AG04450 (cell line): ENCODE measurements at regions of chrX and their contacts with region 1.

Region 1: GRCh38 chrX:21963731-21964405 is 23.4 kb downstream of the SMS start:
- DNase-seq: no peak
- H3K4me3 ChIP-seq: no peak overlapping the region
- H3K27ac ChIP-seq: peak overlapping the region; percentile 65
- H3K27me3 ChIP-seq: no peaks in the 10 kb centered on the region
- CTCF ChIP-seq: no peak

Region 2: GRCh38 chrX:21524008-21524407 is 439.9 kb before region 1 on chrX:
- CTCF ChIA-PET with region 1: no interaction called
- POLR2A ChIA-PET with region 1: no interaction called
- DNase-seq: no peak
- H3K4me3 ChIP-seq: no peak overlapping the region
- H3K27ac ChIP-seq: no peak overlapping the region
- H3K27me3 ChIP-seq: no peaks in the 10 kb centered on the region
- CTCF ChIP-seq: no peak

Region 3: DNA sequence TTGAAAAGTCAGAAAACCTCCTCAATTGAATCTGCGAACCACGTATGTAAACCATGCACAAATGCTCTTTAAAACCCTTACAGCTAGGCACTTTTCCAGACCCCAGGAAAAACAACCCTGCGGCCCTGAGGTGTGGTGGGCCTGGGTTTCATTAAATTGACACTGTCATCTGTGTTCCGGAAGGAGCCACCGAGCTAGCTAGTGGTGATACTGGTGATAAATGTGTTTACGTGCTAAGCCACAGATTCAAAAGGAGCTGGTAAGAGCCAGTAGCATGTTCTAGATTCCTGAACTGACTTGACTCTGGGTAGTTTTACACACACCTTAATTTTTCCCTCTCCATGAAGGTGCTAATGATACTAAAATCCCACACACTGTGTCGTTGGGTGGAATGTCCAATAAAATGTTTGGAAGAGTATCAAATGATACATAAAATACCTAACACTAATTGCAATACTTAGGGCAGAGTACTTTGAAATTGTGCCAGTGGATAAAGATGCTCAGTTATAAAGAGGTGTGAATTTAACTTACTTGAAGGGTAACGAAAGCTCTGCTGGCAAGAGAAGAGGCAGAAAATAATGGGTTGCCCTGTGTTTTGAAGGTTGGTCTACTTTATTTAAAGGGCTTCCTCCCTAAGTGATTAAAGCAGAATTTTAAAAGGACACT is 14.8 kb before region 1 on chrX:
- CTCF ChIA-PET with region 1: no interaction called
- POLR2A ChIA-PET with region 1: interaction called, 12 read pairs
- DNase-seq: no peak
- H3K4me3 ChIP-seq: no peak overlapping the region
- H3K27ac ChIP-seq: no peak overlapping the region
- H3K27me3 ChIP-seq: no peaks in the 10 kb centered on the region
- CTCF ChIP-seq: no peak

Region 4: DNA sequence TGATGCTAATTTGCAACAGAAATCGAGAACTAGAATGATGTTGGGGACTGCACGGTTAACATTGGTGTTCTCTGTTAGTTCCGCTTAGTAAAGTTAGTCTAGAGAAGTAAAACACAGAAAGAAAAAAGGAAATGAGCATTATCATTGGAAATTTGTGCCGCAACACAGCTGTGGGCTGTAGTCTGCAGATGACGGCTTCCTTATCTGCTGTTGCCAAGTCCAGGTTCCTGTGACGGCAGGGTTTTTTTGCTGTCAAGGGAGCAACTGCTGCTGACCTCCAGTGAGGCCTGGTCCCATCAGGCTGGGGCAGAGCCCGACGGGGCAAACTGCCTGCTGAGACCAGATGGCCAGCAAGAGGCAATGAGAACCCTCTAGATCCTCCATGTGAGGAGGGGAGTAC is 29.4 kb after region 1 on chrX:
- CTCF ChIA-PET with region 1: no interaction called
- POLR2A ChIA-PET with region 1: no interaction called
- DNase-seq: no peak
- H3K4me3 ChIP-seq: no peak overlapping the region
- H3K27ac ChIP-seq: no peak overlapping the region
- H3K27me3 ChIP-seq: no peaks in the 10 kb centered on the region
- CTCF ChIP-seq: no peak

Region 5: DNA sequence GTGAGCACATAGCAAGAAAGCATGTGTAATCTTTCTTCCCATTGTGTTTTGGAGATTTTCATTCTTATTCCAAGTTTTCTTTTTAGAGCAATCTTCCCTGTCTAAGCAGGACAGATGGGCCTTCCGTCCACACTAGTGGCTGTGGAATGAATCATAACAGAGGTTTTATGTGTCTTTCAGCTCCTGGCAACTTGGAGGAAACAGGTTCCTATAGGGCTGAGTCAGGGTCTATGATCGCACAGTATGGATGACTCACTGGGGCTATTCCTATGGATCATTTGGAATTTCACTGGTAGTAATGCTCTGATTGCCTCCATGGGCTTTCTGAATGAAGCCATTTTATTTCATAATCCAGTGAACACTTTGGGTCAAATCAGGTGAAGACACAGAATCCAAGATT is 257.1 kb after region 1 on chrX:
- CTCF ChIA-PET with region 1: no interaction called
- POLR2A ChIA-PET with region 1: no interaction called
- DNase-seq: peak; percentile 30
- H3K4me3 ChIP-seq: no peak overlapping the region
- H3K27ac ChIP-seq: no peak overlapping the region
- H3K27me3 ChIP-seq: no peaks in the 10 kb centered on the region
- CTCF ChIP-seq: no peak